PC-3 (cell line): ENCODE measurements at regions of chr11 and their contacts with region 1.

Region 1: GRCh38 chr11:112364962-112365481 is 104.4 kb upstream of the PLET1 start:
- DNase-seq: peak; percentile 96
- ATAC-seq: peak; percentile 98
- H3K4me3 ChIP-seq: no peak overlapping the region
- H3K27ac ChIP-seq: peak overlapping the region; percentile 27
- H3K4me1 ChIP-seq: peaks cover 24% of the 10 kb centered on the region
- H3K27me3 ChIP-seq: 0 out of 2 replicates have a peak, but pooled peaks cover 3% of the 10 kb centered on the region
- CTCF ChIP-seq: no peak

Region 2: GRCh38 chr11:112318193-112318592 is 46.8 kb before region 1 on chr11:
- CTCF ChIA-PET with region 1: no interaction called
- POLR2A ChIA-PET with region 1: no interaction called
- intact Hi-C with region 1: loop called (anchors 1 kb)
- DNase-seq: peak; percentile 99
- ATAC-seq: peak; percentile 62
- H3K4me3 ChIP-seq: no peak overlapping the region
- H3K27ac ChIP-seq: peak overlapping the region; percentile 68
- H3K4me1 ChIP-seq: peaks cover 53% of the 10 kb centered on the region
- H3K27me3 ChIP-seq: no peaks in the 10 kb centered on the region
- CTCF ChIP-seq: no peak

Region 3: DNA sequence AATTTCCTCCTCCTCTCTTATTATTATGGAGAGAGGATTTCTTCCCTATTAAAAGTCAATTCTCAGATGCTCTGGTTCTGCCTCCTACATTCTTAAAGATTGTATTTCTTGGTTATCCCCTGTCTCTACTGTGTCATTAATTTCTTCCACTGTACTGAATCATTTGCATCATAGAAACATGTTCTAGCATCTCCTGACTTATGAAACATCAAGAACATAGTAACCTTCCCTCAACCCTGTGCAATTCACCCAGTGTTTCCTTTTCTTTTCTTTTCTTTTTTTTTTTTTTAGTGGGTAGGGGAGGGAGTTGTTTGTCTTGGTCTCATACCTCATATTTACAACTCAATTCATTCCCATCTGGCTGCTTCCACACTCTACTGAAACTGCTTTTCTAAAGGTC is 183.6 kb after region 1 on chr11:
- CTCF ChIA-PET with region 1: no interaction called
- POLR2A ChIA-PET with region 1: no interaction called
- intact Hi-C with region 1: no loop called
- DNase-seq: no peak
- ATAC-seq: no peak
- H3K4me3 ChIP-seq: no peak overlapping the region
- H3K27ac ChIP-seq: no peak overlapping the region
- H3K4me1 ChIP-seq: no peaks in the 10 kb centered on the region
- H3K27me3 ChIP-seq: peaks cover 35% of the 10 kb centered on the region
- CTCF ChIP-seq: no peak